ENCODE measurements at regions of chr19 and their contacts with region 1.

Region 1: GRCh38 chr19:2840794-2841790 is at the start of gene ZNF555:
- DNase-seq: peak; percentile 96 to 99 (median 98)
- H3K4me3 ChIP-seq: peak within 1 kb of the TSS; percentile 69 to 76
- H3K4me3 Mint-ChIP-seq: peak within 1 kb of the TSS; percentile 90 to 99 (median 92)
- H3K27ac ChIP-seq: peak within 1 kb of the TSS; percentile 66
- H3K27ac Mint-ChIP-seq: peak within 1 kb of the TSS; percentile 81 to 93 (median 92)
- H3K4me1 ChIP-seq: peaks cover 17% of the 10 kb centered on the region
- H3K4me1 Mint-ChIP-seq: peaks cover 7 to 32% (median 17%) of the 10 kb centered on the region in 4 donors
- H3K27me3 ChIP-seq: no peaks in the 10 kb centered on the region
- H3K27me3 Mint-ChIP-seq: no peaks in the 10 kb centered on the region
- total RNA-seq, gene ZNF555: 11.0 to 11.5 TPM

Region 2: GRCh38 chr19:2739602-2740313 is 101.3 kb before region 1 on chr19 and contains the start of gene SLC39A3:
- CTCF ChIA-PET with region 1: no interaction called
- POLR2A ChIA-PET with region 1: no interaction called
- intact Hi-C with region 1: loop called (anchors 1 kb)
- DNase-seq: peak; percentile 97 to 99 (median 98)
- H3K4me3 ChIP-seq: peak within 1 kb of the TSS; percentile 57 to 73
- H3K4me3 Mint-ChIP-seq: peak within 1 kb of the TSS; percentile 80 to 90 (median 87)
- H3K27ac ChIP-seq: peak within 1 kb of the TSS; percentile 52
- H3K27ac Mint-ChIP-seq: peak within 1 kb of the TSS; percentile 29 to 80 (median 75)
- H3K4me1 ChIP-seq: peaks cover 18% of the 10 kb centered on the region
- H3K4me1 Mint-ChIP-seq: peaks cover 12 to 39% (median 17%) of the 10 kb centered on the region in 4 donors
- H3K27me3 ChIP-seq: peaks cover 4% of the 10 kb centered on the region
- H3K27me3 Mint-ChIP-seq: peaks cover 2 to 12% of the 10 kb centered on the region in 2 donors
- total RNA-seq, gene SLC39A3: 18.2 to 19.1 TPM

Region 3: DNA sequence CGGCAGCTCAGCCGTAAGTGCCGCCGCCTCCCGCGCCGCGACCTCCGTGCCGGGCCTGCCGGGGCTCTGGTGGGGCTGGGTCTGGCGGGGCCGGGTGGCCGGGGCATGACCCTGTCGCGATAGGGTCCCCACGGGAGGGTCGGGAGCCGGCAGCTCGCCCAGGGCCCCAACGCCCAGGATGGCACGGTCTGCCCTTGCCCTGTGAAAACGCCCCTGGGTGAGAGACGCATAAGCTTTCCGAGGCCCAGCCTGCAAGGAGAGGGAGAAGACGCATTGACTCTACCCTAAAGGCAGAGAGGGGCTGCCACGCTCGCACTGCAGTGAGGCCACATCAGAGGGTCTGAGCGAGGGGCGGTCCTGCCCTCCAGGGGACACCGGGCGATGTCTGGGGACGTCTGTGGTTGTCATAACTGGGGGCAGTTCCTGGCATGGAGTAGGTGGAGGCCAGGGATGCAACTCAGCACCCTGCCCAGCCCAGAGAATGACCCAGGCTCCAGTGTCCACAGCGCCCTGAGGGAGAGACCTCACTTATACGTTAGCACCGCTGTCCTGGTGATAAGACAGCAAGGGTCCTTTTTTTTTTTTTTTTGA is 20.9 kb before region 1 on chr19:
- CTCF ChIA-PET with region 1: interaction called, 5 read pairs
- POLR2A ChIA-PET with region 1: interaction called, 9 read pairs
- intact Hi-C with region 1: loop called (anchors 1 kb)
- DNase-seq: no peak
- H3K4me3 ChIP-seq: peak overlapping the region; percentile 51 to 69
- H3K4me3 Mint-ChIP-seq: peak overlapping the region; percentile 76 to 87 (median 84)
- H3K27ac ChIP-seq: peak overlapping the region; percentile 33
- H3K27ac Mint-ChIP-seq: peak overlapping the region in 1 of 7 donors; percentile 70
- H3K4me1 ChIP-seq: peaks cover 8% of the 10 kb centered on the region
- H3K4me1 Mint-ChIP-seq: peaks cover 4 to 18% (median 4%) of the 10 kb centered on the region in 4 donors
- H3K27me3 ChIP-seq: no peaks in the 10 kb centered on the region
- H3K27me3 Mint-ChIP-seq: no peaks in the 10 kb centered on the region

Region 4: GRCh38 chr19:2900296-2901252 is 59.5 kb after region 1 on chr19 and contains the start of gene ZNF57:
- CTCF ChIA-PET with region 1: no interaction called
- POLR2A ChIA-PET with region 1: interaction called, 4 read pairs
- intact Hi-C with region 1: loop called (anchors 1 kb)
- DNase-seq: peak; percentile 92 to 98 (median 97)
- H3K4me3 ChIP-seq: peak within 1 kb of the TSS; percentile 52 to 90
- H3K4me3 Mint-ChIP-seq: peak within 1 kb of the TSS; percentile 93 to 100 (median 96)
- H3K27ac ChIP-seq: peak within 1 kb of the TSS; percentile 47
- H3K27ac Mint-ChIP-seq: peak within 1 kb of the TSS; percentile 81 to 94 (median 92)
- H3K4me1 ChIP-seq: peaks cover 15% of the 10 kb centered on the region
- H3K4me1 Mint-ChIP-seq: peaks cover 15 to 29% (median 20%) of the 10 kb centered on the region in 4 donors
- H3K27me3 ChIP-seq: no peaks in the 10 kb centered on the region
- H3K27me3 Mint-ChIP-seq: no peaks in the 10 kb centered on the region
- total RNA-seq, gene ZNF57: 4.2 to 4.7 TPM

Measured in CD4-positive, alpha-beta memory T cell (primary cell).